Activated naive CD4-positive, alpha-beta T cell treated with anti-CD3 and anti-CD28 coated beads for 36 hours (primary cell): ENCODE measurements at regions of chr5 and their contacts with region 1.

Region 1: DNA sequence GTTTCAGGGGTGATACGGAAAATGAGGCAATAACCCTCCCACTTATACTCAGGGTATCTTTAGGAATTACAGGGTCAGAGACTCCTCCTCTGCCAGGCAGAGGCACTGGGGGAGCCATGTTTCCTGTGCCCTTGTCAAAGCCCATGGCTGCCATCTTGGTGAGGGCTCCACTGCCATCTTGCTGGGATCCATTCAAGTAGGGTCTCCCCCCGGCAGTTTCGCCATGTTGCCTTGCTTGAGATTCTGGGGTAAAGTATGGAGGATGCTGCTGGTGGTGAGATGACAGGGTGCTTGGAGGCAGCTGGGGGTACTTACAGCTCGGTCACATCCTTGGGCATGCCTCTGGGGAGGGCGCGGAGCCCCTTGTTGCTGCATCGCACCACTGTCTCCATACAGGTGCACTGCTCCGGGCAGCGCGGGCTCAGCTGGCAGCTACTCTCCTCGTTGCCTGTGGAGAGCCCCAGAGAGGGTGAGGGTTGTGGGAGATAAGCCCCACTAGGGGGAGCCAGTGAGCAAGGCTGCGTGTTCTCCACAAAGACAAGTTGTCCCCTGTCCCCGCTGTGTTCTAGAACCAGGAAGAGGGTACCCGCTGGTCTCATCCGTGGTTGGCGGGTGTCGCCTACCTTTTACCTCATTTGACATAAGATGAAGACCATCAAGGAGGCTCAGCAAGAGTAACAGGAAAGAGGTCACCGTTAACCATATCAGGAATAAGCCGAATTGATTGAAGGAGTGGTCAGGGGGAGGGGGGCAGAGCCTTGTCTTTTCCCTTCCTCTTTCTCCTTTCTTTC is 169.0 kb upstream of the PANK3 start:
- DNase-seq: peak; percentile 68
- H3K4me3 Mint-ChIP-seq: no peak overlapping the region
- H3K27ac Mint-ChIP-seq: no peak overlapping the region
- H3K4me1 Mint-ChIP-seq: peaks cover 5% of the 10 kb centered on the region
- H3K27me3 Mint-ChIP-seq: peaks cover 4% of the 10 kb centered on the region

Region 2: GRCh38 chr5:168770036-168770498 is 21.9 kb after region 1 on chr5:
- CTCF ChIA-PET with region 1: no interaction called
- intact Hi-C with region 1: no loop called
- DNase-seq: no peak
- H3K4me3 Mint-ChIP-seq: no peak overlapping the region
- H3K27ac Mint-ChIP-seq: no peak overlapping the region
- H3K4me1 Mint-ChIP-seq: no peaks in the 10 kb centered on the region
- H3K27me3 Mint-ChIP-seq: no peaks in the 10 kb centered on the region

Region 3: GRCh38 chr5:168879929-168880328 is 131.7 kb after region 1 on chr5:
- CTCF ChIA-PET with region 1: no interaction called
- intact Hi-C with region 1: loop called (anchors 10 kb)
- DNase-seq: no peak
- H3K4me3 Mint-ChIP-seq: no peak overlapping the region
- H3K27ac Mint-ChIP-seq: no peak overlapping the region
- H3K4me1 Mint-ChIP-seq: no peaks in the 10 kb centered on the region
- H3K27me3 Mint-ChIP-seq: peaks cover 13% of the 10 kb centered on the region

Region 4: GRCh38 chr5:168947212-168947868 is 199.2 kb after region 1 on chr5:
- CTCF ChIA-PET with region 1: interaction called, 4 read pairs
- intact Hi-C with region 1: loop called (anchors 5 kb)
- DNase-seq: peak; percentile 62
- H3K4me3 Mint-ChIP-seq: no peak overlapping the region
- H3K27ac Mint-ChIP-seq: no peak overlapping the region
- H3K4me1 Mint-ChIP-seq: no peaks in the 10 kb centered on the region
- H3K27me3 Mint-ChIP-seq: no peaks in the 10 kb centered on the region